ENCODE measurements at regions of chr14 and their contacts with region 1.

Region 1: GRCh38 chr14:63650256-63650952 is 8.7 kb upstream of the WDR89 start:
- DNase-seq: no peak
- H3K4me3 ChIP-seq: no peak overlapping the region
- H3K4me3 Mint-ChIP-seq: no peak overlapping the region
- H3K27ac ChIP-seq: no peak overlapping the region
- H3K27ac Mint-ChIP-seq: peak overlapping the region in 1 of 7 donors; percentile 28
- H3K4me1 ChIP-seq: peaks cover 0 to under 1% of the 10 kb centered on the region in 2 donors
- H3K4me1 Mint-ChIP-seq: no peaks in the 10 kb centered on the region
- H3K27me3 ChIP-seq: no peaks in the 10 kb centered on the region
- H3K27me3 Mint-ChIP-seq: peaks cover 0 to 1% (median 0%) of the 10 kb centered on the region in 3 donors
- CTCF ChIP-seq: no peak

Region 2: GRCh38 chr14:63727774-63728728 is 77.6 kb after region 1 on chr14 and contains the start of gene SGPP1:
- intact Hi-C with region 1: loop called in 1 of 2 experiments (anchors 10 kb)
- DNase-seq: peak; percentile 56 to 75 (median 67)
- H3K4me3 ChIP-seq: peak within 1 kb of the TSS; percentile 78 to 91 (median 85)
- H3K4me3 Mint-ChIP-seq: peak within 1 kb of the TSS; percentile 99 to 100
- H3K27ac ChIP-seq: peak within 1 kb of the TSS; percentile 20 to 70
- H3K27ac Mint-ChIP-seq: peak within 1 kb of the TSS; percentile 69 to 90 (median 85)
- H3K4me1 ChIP-seq: peaks cover 13 to 23% of the 10 kb centered on the region in 2 donors
- H3K4me1 Mint-ChIP-seq: peaks cover 27% of the 10 kb centered on the region
- H3K27me3 ChIP-seq: peaks cover 2 to 18% of the 10 kb centered on the region in 2 donors
- H3K27me3 Mint-ChIP-seq: peaks cover 20 to 46% (median 22%) of the 10 kb centered on the region in 3 donors
- CTCF ChIP-seq: peak; percentile 19
- polyA plus RNA-seq, gene SGPP1: 3.3 to 13.3 (median 7.6) TPM

Measured in CD14-positive monocyte (primary cell).